Caco-2 (cell line): ENCODE measurements at regions of chr7 and their contacts with region 1.

Region 1: DNA sequence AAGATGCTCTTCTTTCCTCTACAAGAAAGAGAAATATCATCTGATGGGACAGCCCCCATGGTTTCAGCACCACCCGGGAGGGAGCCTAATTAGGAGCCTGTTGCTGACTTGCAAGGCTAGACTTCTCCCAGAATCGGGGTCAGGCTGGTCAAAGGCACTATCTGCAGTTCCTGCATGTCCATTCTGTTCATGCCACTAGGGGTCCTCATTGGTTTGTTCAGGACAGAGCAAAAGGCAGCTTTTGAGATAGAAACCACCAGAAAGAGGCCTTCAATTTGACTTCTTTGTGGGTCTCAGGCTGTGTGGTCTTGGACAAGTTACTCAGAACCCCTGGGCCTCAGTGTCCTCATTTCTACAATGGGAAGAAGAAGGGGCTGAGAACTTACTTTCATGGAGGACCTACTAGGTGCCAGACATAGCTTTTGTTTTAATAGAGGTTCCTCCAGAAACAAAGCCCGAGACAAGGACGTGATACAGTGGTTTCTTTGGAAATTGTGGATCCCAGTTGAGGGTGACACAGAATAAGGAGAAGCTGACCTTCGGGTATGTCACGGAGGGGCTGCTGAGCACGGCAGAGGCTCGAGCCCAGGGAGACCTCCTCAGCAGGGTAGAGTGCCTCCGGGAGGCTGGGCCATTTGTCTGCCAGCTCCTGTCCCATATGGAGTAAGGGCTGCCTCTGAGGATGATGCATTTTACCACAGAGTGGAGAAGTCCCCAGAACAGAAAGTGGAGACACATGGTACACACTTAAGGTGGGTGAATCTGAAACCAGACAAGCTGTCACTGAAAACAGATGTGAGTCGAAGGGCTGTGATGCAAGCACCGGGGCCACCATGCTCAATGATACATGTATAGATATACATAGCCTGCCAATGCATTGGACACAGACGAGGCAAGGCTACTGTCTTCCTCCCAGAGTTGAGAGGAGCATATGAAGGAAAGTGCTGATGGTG is 33.1 kb upstream of the NEUROD6 start:
- DNase-seq: peak; percentile 72 to 80
- H3K4me3 ChIP-seq: no peak overlapping the region
- H3K4me3 Mint-ChIP-seq: no peak overlapping the region
- H3K27ac Mint-ChIP-seq: no peak overlapping the region
- H3K4me1 ChIP-seq: no peaks in the 10 kb centered on the region
- H3K4me1 Mint-ChIP-seq: no peaks in the 10 kb centered on the region
- H3K27me3 ChIP-seq: no peaks in the 10 kb centered on the region; the same call in 1 of the 2 replicates
- H3K27me3 Mint-ChIP-seq: no peaks in the 10 kb centered on the region
- CTCF ChIP-seq: peak; percentile 79 to 87

Region 2: GRCh38 chr7:31192986-31193385 is 180.6 kb before region 1 on chr7:
- CTCF ChIA-PET with region 1: no interaction called
- POLR2A ChIA-PET with region 1: no interaction called
- intact Hi-C with region 1: loop called (anchors 2 kb)
- DNase-seq: peak; percentile 69
- H3K4me3 ChIP-seq: no peak overlapping the region
- H3K4me3 Mint-ChIP-seq: no peak overlapping the region
- H3K27ac Mint-ChIP-seq: no peak overlapping the region
- H3K4me1 ChIP-seq: no peaks in the 10 kb centered on the region
- H3K4me1 Mint-ChIP-seq: no peaks in the 10 kb centered on the region
- H3K27me3 ChIP-seq: no peaks in the 10 kb centered on the region
- H3K27me3 Mint-ChIP-seq: peaks cover 5% of the 10 kb centered on the region
- CTCF ChIP-seq: peak; percentile 72 to 87

Region 3: DNA sequence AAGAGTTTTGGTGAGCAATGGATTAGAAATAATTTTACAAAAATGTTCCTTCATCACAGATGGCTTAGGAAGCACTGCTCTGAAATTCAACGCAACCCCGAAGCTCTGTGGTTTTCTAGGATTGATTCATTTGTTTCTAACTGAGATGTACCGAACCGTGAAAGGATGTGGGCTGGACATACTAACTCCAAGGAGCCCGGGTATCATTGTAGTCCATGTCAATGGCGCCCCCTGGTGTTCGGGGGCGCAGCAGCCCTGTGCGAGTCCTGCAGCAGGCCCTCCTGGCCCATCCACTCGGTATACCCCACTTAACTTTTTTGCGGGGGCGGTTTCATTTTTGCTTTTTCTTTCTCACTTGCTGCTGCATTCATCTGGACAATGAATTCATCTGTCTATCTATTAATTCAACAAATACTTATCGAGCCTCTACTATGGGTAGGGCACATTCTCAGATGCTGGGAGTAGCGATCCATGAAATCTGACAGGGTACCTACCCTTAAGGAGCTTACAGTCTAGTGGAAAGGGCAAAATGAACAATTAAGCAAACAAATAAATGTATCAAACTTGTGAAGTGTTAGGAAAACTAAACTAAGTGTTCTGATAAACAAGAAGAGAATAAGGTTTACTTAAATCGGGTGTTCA is 115.1 kb after region 1 on chr7:
- CTCF ChIA-PET with region 1: no interaction called
- POLR2A ChIA-PET with region 1: no interaction called
- intact Hi-C with region 1: loop called (anchors 2 kb)
- DNase-seq: peak; percentile 62 to 63
- H3K4me3 ChIP-seq: no peak overlapping the region
- H3K4me3 Mint-ChIP-seq: no peak overlapping the region
- H3K27ac Mint-ChIP-seq: no peak overlapping the region
- H3K4me1 ChIP-seq: peaks cover 17% of the 10 kb centered on the region
- H3K4me1 Mint-ChIP-seq: no peaks in the 10 kb centered on the region
- H3K27me3 ChIP-seq: no peaks in the 10 kb centered on the region
- H3K27me3 Mint-ChIP-seq: no peaks in the 10 kb centered on the region
- CTCF ChIP-seq: peak; percentile 61 to 69

Region 4: DNA sequence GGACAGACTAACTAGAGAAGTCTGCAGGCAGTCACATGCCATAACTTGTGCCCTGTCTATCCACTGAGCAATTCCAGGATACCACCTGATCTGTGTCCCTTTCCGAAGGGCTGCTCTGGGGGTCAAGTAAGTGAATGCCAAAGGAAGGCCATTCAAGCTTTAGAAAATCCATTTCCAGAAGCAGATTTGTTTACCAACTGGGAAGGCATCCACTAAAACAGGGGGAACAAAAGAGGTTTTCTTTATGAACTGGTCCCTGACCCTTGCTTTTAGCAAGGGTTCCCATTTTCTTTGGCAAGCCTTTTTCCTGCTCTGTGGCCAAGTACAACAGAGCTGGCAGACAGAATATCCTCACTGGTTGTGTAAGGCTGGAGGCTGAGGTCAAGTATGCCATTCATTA is 176.8 kb after region 1 on chr7:
- CTCF ChIA-PET with region 1: no interaction called
- POLR2A ChIA-PET with region 1: no interaction called
- intact Hi-C with region 1: loop called (anchors 2 kb)
- DNase-seq: no peak
- H3K4me3 ChIP-seq: no peak overlapping the region
- H3K4me3 Mint-ChIP-seq: no peak overlapping the region
- H3K27ac Mint-ChIP-seq: no peak overlapping the region
- H3K4me1 ChIP-seq: peaks cover 46% of the 10 kb centered on the region
- H3K4me1 Mint-ChIP-seq: peaks cover 11% of the 10 kb centered on the region
- H3K27me3 ChIP-seq: no peaks in the 10 kb centered on the region
- H3K27me3 Mint-ChIP-seq: no peaks in the 10 kb centered on the region
- CTCF ChIP-seq: no peak

Region 5: DNA sequence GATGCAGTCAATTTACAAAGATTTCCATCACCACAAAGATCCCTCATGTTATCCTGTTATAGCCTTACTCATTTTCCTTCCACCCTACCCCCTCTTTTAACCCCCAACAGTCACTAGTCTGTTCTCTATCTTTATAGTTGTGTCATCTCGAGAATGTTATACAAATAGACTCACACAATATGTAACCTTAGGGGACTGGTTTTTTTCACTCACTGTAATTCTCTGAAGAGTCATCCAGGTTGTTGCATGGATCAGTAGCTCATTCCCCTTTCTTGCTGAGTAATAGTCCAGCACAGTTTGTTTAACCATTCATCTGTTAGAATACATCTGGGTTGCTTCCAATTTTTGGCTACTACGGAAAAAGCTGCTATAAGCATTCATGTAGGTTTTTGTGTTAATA is 817.7 kb after region 1 on chr7:
- CTCF ChIA-PET with region 1: no interaction called
- POLR2A ChIA-PET with region 1: no interaction called
- intact Hi-C with region 1: no loop called
- DNase-seq: no peak
- H3K4me3 ChIP-seq: no peak overlapping the region
- H3K4me3 Mint-ChIP-seq: no peak overlapping the region
- H3K27ac Mint-ChIP-seq: no peak overlapping the region
- H3K4me1 ChIP-seq: no peaks in the 10 kb centered on the region
- H3K4me1 Mint-ChIP-seq: no peaks in the 10 kb centered on the region
- H3K27me3 ChIP-seq: no peaks in the 10 kb centered on the region
- H3K27me3 Mint-ChIP-seq: no peaks in the 10 kb centered on the region
- CTCF ChIP-seq: no peak